B cell (primary cell): ENCODE measurements at regions of chr16 and their contacts with region 1.

Region 1: DNA sequence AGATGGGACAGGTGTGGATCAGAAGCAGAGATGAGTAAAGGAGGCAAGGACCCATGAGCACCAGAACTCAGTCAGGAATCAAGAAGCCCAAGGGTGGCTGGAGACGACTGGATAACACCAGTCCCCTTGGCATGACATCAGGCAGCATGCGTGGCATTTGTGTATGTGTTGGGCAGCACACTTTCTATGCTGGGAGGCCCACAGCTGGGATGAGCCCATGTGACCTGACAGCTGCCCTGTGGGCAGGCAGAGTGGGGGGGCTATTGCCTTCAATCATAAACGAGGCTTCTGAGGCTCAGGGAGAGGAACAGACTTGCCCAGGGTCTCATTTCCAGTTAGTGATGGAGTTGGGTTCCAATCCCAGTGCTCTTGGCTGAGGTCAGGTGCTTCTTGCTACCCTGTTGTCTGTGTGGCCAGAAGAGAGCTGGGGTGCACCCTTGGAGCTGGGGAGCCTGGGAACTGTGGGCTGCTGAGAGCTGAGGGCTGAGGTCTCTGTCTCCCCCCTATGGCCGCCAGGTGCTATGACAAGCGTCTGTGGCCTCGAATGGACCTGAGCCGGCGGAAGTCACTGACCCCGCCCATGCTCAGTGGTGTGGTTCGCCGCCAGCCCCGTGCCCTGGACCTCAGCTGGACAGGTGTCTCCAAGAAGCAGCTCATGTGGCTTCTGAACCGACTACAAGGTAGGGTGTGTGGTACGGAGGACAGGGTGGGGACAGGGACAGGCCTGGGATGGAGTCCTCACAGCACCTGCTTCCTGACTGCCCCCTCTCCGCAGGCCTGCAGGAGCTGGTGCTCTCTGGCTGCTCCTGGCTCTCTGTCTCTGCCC is 7.1 kb upstream of the ORAI3 start:
- DNase-seq: peak; percentile 82
- ATAC-seq: peak; percentile 100
- H3K4me3 ChIP-seq: peak overlapping the region in 2 of 5 experiments; percentile 16 to 23
- H3K4me3 Mint-ChIP-seq: no peak overlapping the region
- H3K27ac ChIP-seq: no peak overlapping the region
- H3K27ac Mint-ChIP-seq: peak overlapping the region; percentile 59
- H3K4me1 ChIP-seq: peaks cover 11 to 19% of the 10 kb centered on the region in 2 donors
- H3K4me1 Mint-ChIP-seq: peaks cover 17% of the 10 kb centered on the region
- H3K27me3 ChIP-seq: no peaks in the 10 kb centered on the region
- H3K27me3 Mint-ChIP-seq: no peaks in the 10 kb centered on the region
- CTCF ChIP-seq: peak; percentile 88

Region 2: GRCh38 chr16:30601966-30602365 is 339.8 kb before region 1 on chr16:
- CTCF ChIA-PET with region 1: no interaction called
- POLR2A ChIA-PET with region 1: no interaction called
- intact Hi-C with region 1: no loop called
- DNase-seq: no peak
- ATAC-seq: no peak
- H3K4me3 ChIP-seq: no peak overlapping the region
- H3K4me3 Mint-ChIP-seq: no peak overlapping the region
- H3K27ac ChIP-seq: no peak overlapping the region
- H3K27ac Mint-ChIP-seq: no peak overlapping the region
- H3K4me1 ChIP-seq: no peaks in the 10 kb centered on the region
- H3K4me1 Mint-ChIP-seq: peaks cover 2% of the 10 kb centered on the region
- H3K27me3 ChIP-seq: no peaks in the 10 kb centered on the region
- H3K27me3 Mint-ChIP-seq: no peaks in the 10 kb centered on the region
- CTCF ChIP-seq: no peak

Region 3: GRCh38 chr16:30650369-30651123 is 291.3 kb before region 1 on chr16 and contains the start of gene PRR14:
- CTCF ChIA-PET with region 1: no interaction called
- POLR2A ChIA-PET with region 1: interaction called, 11 read pairs
- intact Hi-C with region 1: no loop called
- DNase-seq: peak; percentile 99
- ATAC-seq: peak; percentile 76
- H3K4me3 ChIP-seq: peak within 1 kb of the TSS; percentile 62 to 100 (median 93)
- H3K4me3 Mint-ChIP-seq: peak within 1 kb of the TSS; percentile 91
- H3K27ac ChIP-seq: peak within 1 kb of the TSS; percentile 97 to 98
- H3K27ac Mint-ChIP-seq: peak within 1 kb of the TSS; percentile 96
- H3K4me1 ChIP-seq: peaks cover 9 to 21% of the 10 kb centered on the region in 2 donors
- H3K4me1 Mint-ChIP-seq: peaks cover 19% of the 10 kb centered on the region
- H3K27me3 ChIP-seq: no peaks in the 10 kb centered on the region
- H3K27me3 Mint-ChIP-seq: no peaks in the 10 kb centered on the region
- CTCF ChIP-seq: no peak
- total RNA-seq, gene PRR14: 92.7 and 95.8 TPM in 2 replicates

Region 4: DNA sequence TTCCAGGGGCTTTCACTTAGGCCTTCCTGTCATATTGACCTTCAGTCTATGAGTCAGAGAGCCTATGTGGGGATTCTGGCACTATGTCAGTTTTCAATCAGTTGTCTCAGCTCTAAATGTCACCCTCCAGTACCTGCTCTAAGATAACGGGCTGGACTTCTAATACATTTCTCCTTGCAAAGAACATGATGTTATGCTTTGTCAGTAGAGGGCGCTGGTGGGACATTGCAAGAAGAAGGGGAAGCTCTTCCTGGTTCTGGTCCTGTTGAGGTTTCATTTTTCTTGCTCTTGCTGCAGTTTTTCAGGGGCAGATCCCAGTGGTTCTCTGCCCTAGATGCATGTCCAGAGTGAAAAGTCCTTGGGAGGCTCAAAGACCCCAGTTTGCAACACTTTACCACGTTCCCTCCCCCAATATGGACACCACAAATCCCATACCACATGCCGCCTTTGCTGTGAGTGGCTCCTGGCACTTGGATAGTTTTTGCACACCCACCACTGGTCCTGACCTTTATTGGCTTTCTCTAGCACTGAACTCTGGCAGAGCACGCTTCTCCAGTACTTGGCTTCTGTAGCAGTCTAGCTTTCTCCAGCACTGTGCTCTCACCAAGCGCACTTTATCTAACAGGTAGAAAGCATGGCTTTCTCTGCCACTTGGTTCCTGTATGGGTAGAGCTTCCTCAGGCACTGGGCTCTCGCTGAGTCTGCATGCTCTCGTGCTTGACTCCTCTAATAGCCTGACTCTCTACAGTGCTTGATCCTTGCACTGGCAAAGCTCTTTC is 97.0 kb before region 1 on chr16:
- CTCF ChIA-PET with region 1: interaction called, 64 read pairs
- POLR2A ChIA-PET with region 1: no interaction called
- intact Hi-C with region 1: loop called (anchors 1 kb)
- DNase-seq: peak; percentile 89
- ATAC-seq: peak; percentile 88
- H3K4me3 ChIP-seq: peak overlapping the region in 1 of 5 experiments; percentile 11
- H3K4me3 Mint-ChIP-seq: peak overlapping the region; percentile 76
- H3K27ac ChIP-seq: no peak overlapping the region
- H3K27ac Mint-ChIP-seq: peak overlapping the region; percentile 88
- H3K4me1 ChIP-seq: peaks cover 6 to 9% of the 10 kb centered on the region in 2 donors
- H3K4me1 Mint-ChIP-seq: peaks cover 9% of the 10 kb centered on the region
- H3K27me3 ChIP-seq: no peaks in the 10 kb centered on the region
- H3K27me3 Mint-ChIP-seq: peaks cover 3% of the 10 kb centered on the region
- CTCF ChIP-seq: peak; percentile 88

Region 5: GRCh38 chr16:30902029-30902972 is 39.5 kb before region 1 on chr16:
- CTCF ChIA-PET with region 1: interaction called, 13 read pairs
- POLR2A ChIA-PET with region 1: interaction called, 3 read pairs
- intact Hi-C with region 1: no loop called
- DNase-seq: peak; percentile 78
- ATAC-seq: peak; percentile 80
- H3K4me3 ChIP-seq: peak overlapping the region; percentile 45 to 82 (median 62)
- H3K4me3 Mint-ChIP-seq: peak overlapping the region; percentile 98
- H3K27ac ChIP-seq: peak overlapping the region; percentile 57 to 79
- H3K27ac Mint-ChIP-seq: peak overlapping the region; percentile 98
- H3K4me1 ChIP-seq: peaks cover 29 to 40% of the 10 kb centered on the region in 2 donors
- H3K4me1 Mint-ChIP-seq: peaks cover 25% of the 10 kb centered on the region
- H3K27me3 ChIP-seq: no peaks in the 10 kb centered on the region
- H3K27me3 Mint-ChIP-seq: no peaks in the 10 kb centered on the region
- CTCF ChIP-seq: no peak

Region 6: GRCh38 chr16:30931068-30931650 is 10.7 kb before region 1 on chr16:
- CTCF ChIA-PET with region 1: interaction called, 23 read pairs
- POLR2A ChIA-PET with region 1: no interaction called
- intact Hi-C with region 1: no loop called
- DNase-seq: no peak
- ATAC-seq: no peak
- H3K4me3 ChIP-seq: no peak overlapping the region
- H3K4me3 Mint-ChIP-seq: no peak overlapping the region
- H3K27ac ChIP-seq: no peak overlapping the region
- H3K27ac Mint-ChIP-seq: no peak overlapping the region
- H3K4me1 ChIP-seq: no peaks in the 10 kb centered on the region
- H3K4me1 Mint-ChIP-seq: peaks cover under 1% of the 10 kb centered on the region
- H3K27me3 ChIP-seq: no peaks in the 10 kb centered on the region
- H3K27me3 Mint-ChIP-seq: no peaks in the 10 kb centered on the region
- CTCF ChIP-seq: no peak

Region 7: GRCh38 chr16:30957456-30958174 is 15.8 kb after region 1 on chr16 and contains the start of gene SETD1A:
- CTCF ChIA-PET with region 1: interaction called, 42 read pairs
- POLR2A ChIA-PET with region 1: interaction called, 5 read pairs
- intact Hi-C with region 1: no loop called
- DNase-seq: peak; percentile 99
- ATAC-seq: peak; percentile 83
- H3K4me3 ChIP-seq: peak within 1 kb of the TSS; percentile 85 to 99 (median 95)
- H3K4me3 Mint-ChIP-seq: peak within 1 kb of the TSS; percentile 97
- H3K27ac ChIP-seq: peak within 1 kb of the TSS; percentile 92 to 96
- H3K27ac Mint-ChIP-seq: peak within 1 kb of the TSS; percentile 99
- H3K4me1 ChIP-seq: peaks cover 15 to 25% of the 10 kb centered on the region in 2 donors
- H3K4me1 Mint-ChIP-seq: peaks cover 40% of the 10 kb centered on the region
- H3K27me3 ChIP-seq: no peaks in the 10 kb centered on the region
- H3K27me3 Mint-ChIP-seq: no peaks in the 10 kb centered on the region
- CTCF ChIP-seq: no peak
- total RNA-seq, gene SETD1A: 37.2 and 39.5 TPM in 2 replicates